Activated CD4-positive, alpha-beta T cell treated with anti-CD3 and anti-CD28 coated beads, Interleukin-2, amount 10 ng/mL, durations not matched to agents 24 days and 14 days (primary cell): ENCODE measurements at regions of chr14 and their contacts with region 1.

Region 1: DNA sequence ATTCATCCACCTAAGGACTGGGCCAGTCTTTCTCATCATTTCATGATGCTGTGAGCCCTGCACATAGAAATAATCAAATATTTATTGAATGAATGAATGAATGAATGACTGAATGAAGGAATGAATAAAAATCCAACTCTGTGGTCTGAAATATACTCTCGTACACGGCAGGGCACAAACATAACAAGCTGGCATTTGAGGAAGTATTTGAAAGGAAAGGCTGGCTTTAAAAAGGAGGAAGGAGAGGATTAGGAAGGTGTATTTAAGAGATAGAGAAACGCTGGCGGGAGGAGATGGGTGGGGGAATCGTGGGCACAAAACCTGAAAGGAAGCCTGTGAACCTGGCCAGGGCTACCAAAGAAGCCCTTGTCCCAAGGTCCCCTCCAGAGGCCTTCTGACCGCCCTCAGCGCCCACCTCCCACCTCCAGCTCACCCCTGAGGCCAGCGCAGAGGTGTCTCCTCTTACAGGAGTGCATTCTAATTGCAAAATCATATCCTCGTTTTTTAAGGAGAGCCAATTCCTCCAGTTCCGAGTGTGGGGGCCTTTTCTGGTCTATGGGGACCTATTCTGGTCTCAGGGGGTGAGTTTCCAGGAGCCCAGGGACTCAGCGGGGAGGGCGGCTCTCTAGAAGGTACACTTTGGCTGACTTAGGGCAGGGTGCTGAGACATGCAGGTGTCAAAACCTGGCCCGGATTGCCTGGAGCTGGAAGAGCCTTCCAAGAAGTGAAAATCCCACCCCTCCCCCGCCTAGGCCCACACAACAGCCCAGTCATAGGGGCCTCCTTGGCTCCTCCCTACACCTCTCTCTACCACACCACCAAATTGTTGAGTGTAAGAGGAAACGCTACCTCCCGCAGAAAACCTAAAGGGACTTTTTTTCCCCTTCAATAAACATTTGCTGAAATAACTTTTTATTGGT is 8.7 kb upstream of the JDP2 start:
- DNase-seq: peak; percentile 87
- H3K4me3 Mint-ChIP-seq: peak overlapping the region; percentile 73
- H3K27ac Mint-ChIP-seq: peak overlapping the region; percentile 66
- H3K4me1 Mint-ChIP-seq: peaks cover 25% of the 10 kb centered on the region
- H3K27me3 Mint-ChIP-seq: no peaks in the 10 kb centered on the region

Region 2: DNA sequence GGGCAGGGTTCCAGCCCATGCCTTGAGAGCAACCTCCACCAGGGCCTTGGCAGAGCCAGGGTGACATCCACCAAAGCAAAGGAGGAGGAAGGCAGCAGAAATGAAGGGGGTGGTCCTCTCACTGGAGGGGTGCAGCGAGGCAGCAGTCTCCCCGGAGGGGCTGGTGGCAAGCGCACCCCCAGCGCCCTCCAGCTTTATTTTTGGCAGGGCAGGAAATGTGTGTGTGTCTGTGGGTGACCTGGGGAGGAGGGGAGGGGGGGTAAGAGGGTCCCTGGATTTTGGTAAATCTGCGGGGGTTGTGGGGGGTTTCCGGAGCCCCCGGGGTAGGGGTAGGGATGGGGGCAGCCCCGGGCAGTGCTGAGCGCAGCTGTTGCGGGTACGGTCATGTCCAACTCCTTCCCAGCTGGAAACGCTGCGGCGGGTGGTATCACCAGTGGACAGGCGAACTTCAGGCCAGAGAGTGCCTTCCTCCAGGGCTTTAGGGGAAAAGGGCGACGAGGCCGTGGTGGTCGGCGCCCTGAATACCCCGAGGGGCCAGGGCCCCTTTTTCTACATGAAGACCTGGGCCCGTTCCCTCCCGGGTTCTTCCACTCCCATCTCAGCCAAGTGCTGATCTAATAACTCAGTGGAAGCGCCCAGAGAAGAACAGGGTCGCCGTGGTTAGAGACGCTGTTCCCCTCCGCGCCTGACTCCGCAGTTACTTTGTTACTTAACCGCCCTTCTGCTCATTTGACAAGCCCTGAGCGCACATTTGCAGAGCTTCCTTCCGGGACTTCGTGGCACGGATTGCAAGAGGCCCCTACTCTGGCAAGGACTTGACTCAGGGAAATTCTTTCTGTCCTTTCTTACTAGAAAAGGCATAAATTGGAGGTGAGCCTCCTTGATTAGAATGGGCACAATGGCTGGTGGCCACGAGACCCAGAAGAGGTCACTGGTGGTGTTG is 85.2 kb before region 1 on chr14:
- intact Hi-C with region 1: loop called (anchors 5 kb)
- DNase-seq: peak; percentile 88
- H3K4me3 Mint-ChIP-seq: peak overlapping the region; percentile 82
- H3K27ac Mint-ChIP-seq: peak overlapping the region; percentile 89
- H3K4me1 Mint-ChIP-seq: peaks cover 22% of the 10 kb centered on the region
- H3K27me3 Mint-ChIP-seq: peaks cover 17% of the 10 kb centered on the region

Region 3: DNA sequence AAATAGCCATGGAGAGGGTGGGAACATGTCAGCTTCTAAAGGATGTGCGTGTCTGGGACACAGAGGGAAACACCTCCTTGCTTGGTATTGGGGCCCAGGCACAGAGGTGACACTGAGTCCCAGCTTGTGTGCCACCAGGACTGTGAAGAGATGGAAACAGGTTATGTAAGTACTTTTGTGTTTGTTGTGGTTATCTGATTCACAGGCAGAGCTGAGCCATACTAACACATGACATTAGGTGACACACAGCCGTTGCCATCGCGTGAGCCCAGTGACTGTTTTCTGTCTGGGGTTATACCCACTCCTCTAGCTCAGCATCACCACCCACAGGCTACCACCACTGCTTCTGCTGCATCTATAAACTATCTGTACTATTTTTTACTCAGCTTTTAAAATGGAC is 147.2 kb after region 1 on chr14:
- intact Hi-C with region 1: loop called (anchors 5 kb)
- DNase-seq: peak; percentile 90
- H3K4me3 Mint-ChIP-seq: peak overlapping the region; percentile 50
- H3K27ac Mint-ChIP-seq: peak overlapping the region; percentile 89
- H3K4me1 Mint-ChIP-seq: peaks cover 53% of the 10 kb centered on the region
- H3K27me3 Mint-ChIP-seq: no peaks in the 10 kb centered on the region